ENCODE measurements at regions of chrX and their contacts with region 1.

Region 1: DNA sequence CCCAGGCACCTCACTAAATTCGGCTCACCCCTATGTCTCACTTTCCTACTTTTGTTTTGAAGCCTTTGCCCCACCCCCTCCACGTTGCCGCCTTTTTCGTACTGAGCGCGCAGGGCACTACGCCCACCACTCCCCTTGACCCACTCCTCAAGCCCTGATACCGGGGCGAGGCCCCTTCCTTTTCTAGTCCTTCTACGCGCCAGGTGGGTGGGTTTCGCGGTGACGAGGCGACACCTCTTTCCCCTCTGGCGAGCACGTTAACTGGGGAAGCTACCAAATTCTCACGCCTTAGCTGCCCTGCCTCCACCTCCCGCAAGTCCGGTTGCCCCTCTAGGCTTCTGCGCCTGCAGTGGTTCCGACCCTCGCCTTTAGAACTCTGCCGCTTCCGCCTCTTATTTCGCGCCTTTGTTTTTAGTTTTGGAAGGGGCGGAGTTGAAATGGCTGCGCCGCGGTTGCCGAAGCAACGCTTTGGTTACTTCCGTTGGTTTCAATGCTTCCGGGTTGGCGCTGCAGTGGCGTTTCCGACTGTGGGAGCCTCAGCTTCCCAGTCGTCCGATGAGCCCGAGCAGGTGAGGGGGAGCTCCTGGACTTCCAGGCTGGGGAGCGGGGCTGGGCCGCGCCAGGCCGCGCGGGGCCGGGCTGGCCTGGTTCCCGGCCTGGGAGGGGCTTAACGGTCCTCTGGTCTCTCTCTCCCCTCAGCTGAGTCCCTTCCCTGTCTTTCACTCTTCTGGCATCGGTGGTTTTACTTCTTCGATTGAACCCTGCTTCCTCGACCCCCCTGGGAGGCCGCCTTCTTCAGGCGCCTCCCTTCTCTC is at the start of gene SLC25A14:
- DNase-seq: peak; percentile 74 to 82
- H3K4me3 ChIP-seq: peak within 1 kb of the TSS; percentile 80
- H3K27ac ChIP-seq: 0 out of 2 replicates have a peak within 1 kb of the TSS, but pooled peaks have one; percentile 19
- H3K4me1 ChIP-seq: 0 out of 2 replicates have a peak, but pooled peaks cover 5% of the 10 kb centered on the region
- H3K27me3 ChIP-seq: no peaks in the 10 kb centered on the region
- CTCF ChIP-seq: no peak
- total RNA-seq, gene SLC25A14: 28.2 and 30.4 TPM in 2 replicates

Region 2: DNA sequence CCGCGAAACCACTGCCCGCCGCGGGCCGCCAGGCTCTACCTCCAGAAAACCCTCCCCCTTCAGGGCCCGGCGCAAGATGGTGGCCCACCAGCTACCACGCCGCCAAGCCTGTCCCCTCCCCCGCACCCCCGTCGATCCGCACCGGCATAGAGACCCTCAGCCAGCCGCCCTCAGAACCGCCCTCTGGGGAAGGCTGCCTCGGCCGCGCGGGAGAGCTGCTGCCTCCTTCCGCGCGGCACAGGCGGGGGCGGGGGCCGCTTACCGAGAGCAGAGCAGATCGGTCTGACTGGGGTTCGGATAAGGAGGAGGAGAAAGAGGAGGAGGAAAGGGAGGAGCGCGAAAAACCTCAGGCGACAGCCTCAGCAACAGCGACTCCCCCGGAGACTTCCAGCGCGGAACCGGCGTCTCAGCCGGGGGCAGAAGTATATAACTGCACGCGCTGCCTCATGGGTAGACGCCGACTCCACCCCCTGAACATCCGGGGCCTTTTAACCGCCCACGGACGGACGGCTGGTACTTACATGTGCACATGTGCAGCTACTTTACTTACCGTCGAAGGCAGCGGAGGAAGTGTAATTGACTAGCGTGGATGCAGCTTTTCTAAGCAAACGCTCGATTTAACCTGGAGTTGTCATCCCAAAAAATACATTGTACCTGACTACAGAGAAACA is 71.0 kb before region 1 on chrX and contains the start of gene ZNF280C:
- CTCF ChIA-PET with region 1: no interaction called
- POLR2A ChIA-PET with region 1: no interaction called
- intact Hi-C with region 1: loop called (anchors 1 kb)
- DNase-seq: peak; percentile 93
- H3K4me3 ChIP-seq: peak within 1 kb of the TSS; percentile 87
- H3K27ac ChIP-seq: peak within 1 kb of the TSS; percentile 74
- H3K4me1 ChIP-seq: peaks cover 37% of the 10 kb centered on the region
- H3K27me3 ChIP-seq: no peaks in the 10 kb centered on the region
- CTCF ChIP-seq: no peak
- total RNA-seq, gene ZNF280C: 5.8 and 7.8 TPM in 2 replicates

Region 3: GRCh38 chrX:130393451-130394074 is 53.9 kb after region 1 on chrX:
- CTCF ChIA-PET with region 1: no interaction called
- POLR2A ChIA-PET with region 1: no interaction called
- intact Hi-C with region 1: loop called (anchors 5 kb)
- DNase-seq: peak; percentile 52 to 61
- H3K4me3 ChIP-seq: no peak overlapping the region
- H3K27ac ChIP-seq: no peak overlapping the region
- H3K4me1 ChIP-seq: no peaks in the 10 kb centered on the region
- H3K27me3 ChIP-seq: peaks cover 24% of the 10 kb centered on the region
- CTCF ChIP-seq: peak; percentile 76

Region 4: DNA sequence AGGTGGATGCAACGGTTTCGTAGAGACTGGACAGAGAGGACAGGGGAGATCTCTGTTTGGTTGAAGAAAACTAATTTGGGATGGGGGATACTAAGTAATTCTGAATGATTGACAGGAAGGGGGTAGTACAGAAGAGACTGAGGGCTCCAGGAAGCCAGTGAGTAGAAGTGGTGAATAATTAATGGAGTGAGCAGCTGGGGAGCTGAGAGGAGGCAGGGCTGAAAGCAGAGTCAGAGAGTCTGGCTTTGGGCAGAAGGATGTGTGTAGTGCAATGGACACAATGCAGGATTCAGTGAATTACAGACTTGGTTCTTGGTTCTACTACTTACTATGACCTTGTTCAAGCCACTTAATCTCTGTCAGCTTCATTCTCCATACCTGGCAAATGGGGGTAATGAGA is 223.9 kb after region 1 on chrX:
- CTCF ChIA-PET with region 1: no interaction called
- POLR2A ChIA-PET with region 1: no interaction called
- intact Hi-C with region 1: no loop called
- DNase-seq: no peak
- H3K4me3 ChIP-seq: no peak overlapping the region
- H3K27ac ChIP-seq: no peak overlapping the region
- H3K4me1 ChIP-seq: no peaks in the 10 kb centered on the region
- H3K27me3 ChIP-seq: 0 out of 2 replicates have a peak, but pooled peaks cover 4% of the 10 kb centered on the region
- CTCF ChIP-seq: no peak

Region 5: GRCh38 chrX:130669233-130669632 is 329.6 kb after region 1 on chrX:
- CTCF ChIA-PET with region 1: no interaction called
- POLR2A ChIA-PET with region 1: no interaction called
- intact Hi-C with region 1: no loop called
- DNase-seq: no peak
- H3K4me3 ChIP-seq: no peak overlapping the region
- H3K27ac ChIP-seq: no peak overlapping the region
- H3K4me1 ChIP-seq: no peaks in the 10 kb centered on the region
- H3K27me3 ChIP-seq: no peaks in the 10 kb centered on the region
- CTCF ChIP-seq: no peak

Region 6: GRCh38 chrX:130902783-130903613 is 563.4 kb after region 1 on chrX and contains the start of gene ENOX2:
- CTCF ChIA-PET with region 1: no interaction called
- POLR2A ChIA-PET with region 1: interaction called, 14 read pairs
- intact Hi-C with region 1: no loop called
- DNase-seq: peak; percentile 95 to 98
- H3K4me3 ChIP-seq: peak within 1 kb of the TSS; percentile 76
- H3K27ac ChIP-seq: peak within 1 kb of the TSS; percentile 70
- H3K4me1 ChIP-seq: peaks cover 8% of the 10 kb centered on the region; the same call in 1 of the 2 replicates
- H3K27me3 ChIP-seq: no peaks in the 10 kb centered on the region
- CTCF ChIP-seq: no peak
- total RNA-seq, gene ENOX2: 18.4 and 21.4 TPM in 2 replicates

Measured in PC-9 (cell line).